Transverse colon (tissue), 4 donors: ENCODE measurements at regions of chr1 and their contacts with region 1.

Region 1: DNA sequence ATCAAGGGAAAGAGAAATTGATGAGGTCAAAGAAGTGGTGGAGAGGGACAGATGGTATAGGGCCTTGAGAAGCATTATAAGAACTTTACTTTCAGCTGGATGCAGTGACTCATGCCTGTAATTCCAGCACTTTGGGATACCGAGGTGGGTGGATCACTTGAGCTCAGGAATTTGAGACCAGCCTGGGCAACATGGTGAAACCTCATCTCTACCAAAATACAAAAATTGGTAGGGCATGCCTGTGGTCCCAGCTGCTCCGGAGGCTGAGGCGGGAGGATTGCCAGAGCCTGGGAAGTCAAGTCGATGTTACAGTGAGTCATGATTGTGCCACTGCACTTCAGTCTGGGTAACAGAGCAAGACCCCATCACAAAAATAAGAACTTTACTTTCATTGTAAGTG is 5.7 kb downstream of the TMEM50A start:
- DNase-seq: no peak
- H3K4me3 ChIP-seq: no peak overlapping the region
- H3K27ac ChIP-seq: no peak overlapping the region
- H3K4me1 ChIP-seq: peaks cover 10 to 22% (median 16%) of the 10 kb centered on the region in 4 donors
- H3K27me3 ChIP-seq: no peaks in the 10 kb centered on the region
- CTCF ChIP-seq: no peak
- EP300 ChIP-seq: no peak
- POLR2A ChIP-seq: no peak

Region 2: GRCh38 chr1:25253911-25254310 is 90.0 kb before region 1 on chr1:
- in situ Hi-C with region 1: loop called in 1 of 4 experiments (anchors 10 kb)
- intact Hi-C with region 1: no loop called
- DNase-seq: no peak
- H3K4me3 ChIP-seq: no peak overlapping the region
- H3K27ac ChIP-seq: no peak overlapping the region
- H3K4me1 ChIP-seq: no peaks in the 10 kb centered on the region
- H3K27me3 ChIP-seq: no peaks in the 10 kb centered on the region
- CTCF ChIP-seq: no peak
- EP300 ChIP-seq: no peak
- POLR2A ChIP-seq: no peak

Region 3: DNA sequence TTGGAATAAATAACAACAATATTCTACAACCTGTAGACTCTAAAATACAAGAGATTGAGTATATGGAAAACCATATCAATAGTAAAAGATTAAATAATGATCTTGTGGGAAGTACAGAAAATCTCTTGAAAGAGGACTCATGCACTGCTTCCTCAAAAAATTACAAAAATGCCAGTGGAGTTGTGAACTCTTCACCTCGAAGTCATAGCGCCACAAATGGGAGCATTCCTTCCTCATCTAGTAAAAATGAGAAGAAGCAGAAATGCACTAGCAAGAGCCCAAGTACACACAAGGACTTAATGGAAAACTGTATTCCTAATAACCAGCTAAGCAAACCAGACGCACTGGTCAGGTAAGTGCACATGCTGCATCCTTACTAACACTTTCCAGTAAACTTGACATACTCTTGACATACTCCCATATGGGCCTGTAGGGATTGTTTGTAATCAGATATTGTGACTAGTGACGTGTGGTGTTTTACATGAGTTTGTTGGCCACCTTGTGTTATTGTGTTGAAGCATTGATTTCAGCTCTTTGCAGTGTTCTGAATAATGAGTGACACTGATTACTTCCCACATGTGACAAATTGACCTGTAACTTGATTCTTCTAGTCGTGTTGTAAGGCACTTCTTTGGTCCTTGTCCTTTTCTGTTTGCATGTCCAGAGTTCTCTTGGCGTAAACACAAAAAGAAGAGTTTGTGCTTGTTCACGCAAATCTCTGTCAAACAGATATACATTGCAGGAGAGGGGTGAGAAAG is 114.8 kb after region 1 on chr1:
- in situ Hi-C with region 1: no loop called
- intact Hi-C with region 1: no loop called
- DNase-seq: no peak
- H3K4me3 ChIP-seq: no peak overlapping the region
- H3K27ac ChIP-seq: no peak overlapping the region
- H3K4me1 ChIP-seq: peaks cover 0 to 27% (median 8%) of the 10 kb centered on the region in 4 donors
- H3K27me3 ChIP-seq: no peaks in the 10 kb centered on the region
- CTCF ChIP-seq: no peak
- EP300 ChIP-seq: no peak
- POLR2A ChIP-seq: no peak